SK-N-SH (cell line): ENCODE measurements at regions of chr19 and their contacts with region 1.

Region 1: DNA sequence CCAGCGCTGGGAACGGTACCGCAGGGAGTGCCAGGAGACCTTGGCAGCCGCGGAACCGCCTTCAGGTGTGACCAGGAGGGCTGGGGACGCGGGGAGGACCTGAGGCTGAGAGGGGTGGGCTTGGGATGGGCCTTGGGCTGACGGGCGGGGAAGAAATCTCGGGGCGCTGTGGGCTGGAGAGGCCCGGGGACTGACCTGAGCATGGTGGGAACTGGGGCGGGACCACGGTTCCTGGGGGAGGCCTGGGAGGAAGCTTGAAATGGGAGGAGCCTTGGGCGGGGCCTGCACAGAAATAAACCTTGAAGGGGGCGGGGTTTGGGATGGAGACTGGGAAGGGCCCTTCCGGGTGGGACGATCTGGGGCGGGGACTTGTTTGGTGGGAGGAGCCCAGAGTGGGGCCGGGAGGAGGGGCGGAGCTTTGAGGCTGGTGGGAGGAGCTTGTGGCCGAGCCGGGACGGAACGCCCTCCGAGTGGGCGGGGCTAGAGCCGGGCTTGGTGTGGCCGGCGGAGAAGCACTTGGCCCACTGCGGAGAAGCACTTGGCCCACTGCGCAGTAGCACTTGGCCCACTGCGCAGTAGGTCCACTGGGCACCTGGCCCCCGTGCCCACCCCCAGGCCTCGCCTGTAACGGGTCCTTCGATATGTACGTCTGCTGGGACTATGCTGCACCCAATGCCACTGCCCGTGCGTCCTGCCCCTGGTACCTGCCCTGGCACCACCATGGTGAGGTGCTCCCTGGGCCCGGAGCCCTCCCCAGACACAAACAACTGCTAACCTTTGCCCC is 2.8 kb downstream of the GIPR start:
- DNase-seq: peak; percentile 99
- H3K4me3 ChIP-seq: peak overlapping the region in 1 of 2 experiments; percentile 30; a peak in 1 of 4 replicates
- H3K27ac ChIP-seq: no peak overlapping the region; a peak in 1 of 4 replicates
- H3K4me1 ChIP-seq: peaks cover 4 to 15% of the 10 kb centered on the region in 2 experiments; a peak in 2 of 4 replicates
- H3K27me3 ChIP-seq: no peaks in the 10 kb centered on the region
- CTCF ChIP-seq: no peak
- EP300 ChIP-seq: no peak
- RAD21 ChIP-seq: no peak

Region 2: GRCh38 chr19:45681391-45682015 is 10.6 kb after region 1 on chr19:
- CTCF ChIA-PET with region 1: interaction called, 52 read pairs
- POLR2A ChIA-PET with region 1: interaction called, 4 read pairs
- DNase-seq: peak; percentile 91
- H3K4me3 ChIP-seq: peak overlapping the region; percentile 40 to 64
- H3K27ac ChIP-seq: peak overlapping the region; percentile 34 to 36; a peak in 3 of 4 replicates
- H3K4me1 ChIP-seq: peaks cover 0 to 14% of the 10 kb centered on the region in 2 experiments; a peak in 1 of 4 replicates
- H3K27me3 ChIP-seq: no peaks in the 10 kb centered on the region
- CTCF ChIP-seq: peak; percentile 88
- EP300 ChIP-seq: no peak
- RAD21 ChIP-seq: peak; percentile 66